ENCODE measurements at regions of chr4 and their contacts with region 1.

Region 1: GRCh38 chr4:38179690-38180377 is 219.6 kb downstream of the PTTG2 start:
- DNase-seq: peak; percentile 31 to 85 (median 64)
- ATAC-seq: peak; percentile 41 to 55 (median 46)
- H3K4me3 ChIP-seq: no peak overlapping the region
- H3K4me3 Mint-ChIP-seq: no peak overlapping the region
- H3K27ac ChIP-seq: no peak overlapping the region
- H3K27ac Mint-ChIP-seq: no peak overlapping the region
- H3K4me1 ChIP-seq: peaks cover 14 to 27% of the 10 kb centered on the region in 2 experiments
- H3K4me1 Mint-ChIP-seq: peaks cover 34 to 45% (median 41%) of the 10 kb centered on the region in 3 donors
- H3K27me3 ChIP-seq: no peaks in the 10 kb centered on the region
- H3K27me3 Mint-ChIP-seq: no peaks in the 10 kb centered on the region

Region 2: GRCh38 chr4:37977471-37978247 is 202.2 kb before region 1 on chr4:
- CTCF ChIA-PET with region 1: no interaction called
- POLR2A ChIA-PET with region 1: no interaction called
- DNase-seq: peak; percentile 48 to 86 (median 69)
- ATAC-seq: peak; percentile 82 to 87 (median 84)
- H3K4me3 ChIP-seq: peak overlapping the region; percentile 52 to 68
- H3K4me3 Mint-ChIP-seq: peak overlapping the region; percentile 79 to 84 (median 84)
- H3K27ac ChIP-seq: peak overlapping the region; percentile 54
- H3K27ac Mint-ChIP-seq: peak overlapping the region; percentile 71 to 72
- H3K4me1 ChIP-seq: peaks cover 6 to 13% of the 10 kb centered on the region in 2 experiments
- H3K4me1 Mint-ChIP-seq: peaks cover 18 to 43% (median 37%) of the 10 kb centered on the region in 3 donors
- H3K27me3 ChIP-seq: no peaks in the 10 kb centered on the region
- H3K27me3 Mint-ChIP-seq: no peaks in the 10 kb centered on the region

Region 3: DNA sequence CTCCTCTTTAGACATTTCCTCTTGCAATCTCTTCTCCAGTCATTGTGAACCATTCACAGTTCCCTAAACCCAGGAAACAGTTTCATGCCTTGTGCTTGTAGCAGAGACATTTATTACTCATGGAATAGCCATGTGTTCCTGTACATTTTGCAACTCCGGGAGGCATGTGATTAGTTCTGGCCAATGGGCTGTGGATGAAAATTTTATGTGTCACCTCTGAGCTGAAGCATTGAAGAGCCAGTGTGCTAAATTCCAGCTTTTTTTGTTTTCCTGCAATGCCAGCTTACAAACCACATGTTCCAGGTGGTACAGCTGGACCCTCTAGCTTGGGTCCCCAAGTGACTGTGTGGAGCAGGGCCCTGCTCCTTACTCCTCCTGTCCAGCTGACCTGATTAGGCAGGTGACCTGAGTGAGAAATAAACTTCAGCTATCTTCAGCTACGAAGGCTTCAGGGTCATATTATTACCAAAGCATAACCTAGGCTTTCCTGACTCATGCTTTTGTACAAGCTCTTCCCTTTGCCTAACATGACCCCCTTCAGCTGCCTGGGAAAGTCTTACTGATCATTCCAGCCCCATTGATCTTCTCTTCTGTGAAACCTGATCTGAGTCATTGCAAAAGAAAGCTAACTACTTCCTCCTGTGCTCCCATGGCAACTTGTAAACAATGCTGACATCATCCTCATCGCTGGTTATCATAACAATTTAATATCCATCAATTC is 19.2 kb before region 1 on chr4:
- CTCF ChIA-PET with region 1: interaction called, 3 to 4 read pairs
- POLR2A ChIA-PET with region 1: interaction called in 1 of 2 experiments, 13 read pairs
- DNase-seq: peak in 22 of 35 experiments; percentile 3 to 73 (median 23)
- ATAC-seq: peak; percentile 74 to 93 (median 82)
- H3K4me3 ChIP-seq: no peak overlapping the region
- H3K4me3 Mint-ChIP-seq: no peak overlapping the region
- H3K27ac ChIP-seq: peak overlapping the region; percentile 46
- H3K27ac Mint-ChIP-seq: peak overlapping the region; percentile 30 to 54
- H3K4me1 ChIP-seq: peaks cover 3 to 16% of the 10 kb centered on the region in 2 experiments
- H3K4me1 Mint-ChIP-seq: peaks cover 50 to 67% (median 59%) of the 10 kb centered on the region in 3 donors
- H3K27me3 ChIP-seq: no peaks in the 10 kb centered on the region
- H3K27me3 Mint-ChIP-seq: no peaks in the 10 kb centered on the region

Region 4: DNA sequence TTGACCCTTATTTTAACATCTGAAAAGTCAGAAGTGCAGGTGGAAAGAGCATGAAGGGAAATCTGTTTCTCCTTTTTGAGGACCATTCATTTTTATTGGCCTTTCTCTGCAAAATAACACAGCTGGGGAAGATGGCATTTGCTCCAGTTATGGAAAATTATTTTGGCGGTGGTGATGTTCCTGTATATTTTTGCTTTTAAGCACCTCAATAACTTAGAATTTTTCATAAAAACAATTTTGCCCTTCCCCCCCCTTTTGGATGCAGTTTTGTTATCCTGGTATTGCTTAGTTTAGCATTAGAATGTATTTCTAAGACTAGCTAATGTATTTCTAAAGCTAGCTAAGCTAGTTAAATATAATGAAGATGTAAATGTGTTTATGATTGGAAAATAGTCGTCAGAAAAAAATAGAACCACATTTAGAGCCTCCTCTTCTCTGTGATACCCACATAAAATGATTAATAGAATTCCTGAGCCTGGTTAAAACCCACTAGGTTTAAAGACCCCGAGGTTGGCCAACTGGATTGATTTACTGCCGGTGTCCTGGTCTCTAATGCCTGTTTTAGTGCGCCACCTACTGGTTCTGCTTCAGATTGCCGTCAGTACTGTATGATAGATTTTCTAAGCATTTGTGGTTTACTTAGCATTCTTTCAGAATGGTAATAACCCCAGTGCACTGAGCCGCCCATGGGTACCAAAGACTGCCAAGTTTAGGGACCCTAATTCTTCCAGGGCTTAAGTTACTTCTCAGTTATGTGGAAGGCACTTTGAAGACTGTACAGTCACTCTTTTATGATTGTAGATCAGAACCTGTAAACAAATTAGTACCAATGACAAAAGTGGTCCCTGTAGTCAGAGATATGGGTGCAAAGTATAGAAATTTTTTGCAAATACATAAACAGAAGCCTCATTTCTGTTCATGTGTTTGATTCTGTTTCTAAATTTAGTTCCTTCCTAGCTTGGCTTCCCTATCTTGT is 495.6 kb after region 1 on chr4:
- CTCF ChIA-PET with region 1: interaction called, 9 to 67 read pairs
- POLR2A ChIA-PET with region 1: interaction called in 1 of 2 experiments, 3 read pairs
- DNase-seq: peak; percentile 55 to 94 (median 78)
- ATAC-seq: peak; percentile 51 to 65 (median 58)
- H3K4me3 ChIP-seq: no peak overlapping the region
- H3K4me3 Mint-ChIP-seq: peak overlapping the region; percentile 70 to 97 (median 82)
- H3K27ac ChIP-seq: peak overlapping the region; percentile 72
- H3K27ac Mint-ChIP-seq: peak overlapping the region; percentile 94 to 96
- H3K4me1 ChIP-seq: peaks cover 60 to 72% of the 10 kb centered on the region in 2 experiments
- H3K4me1 Mint-ChIP-seq: peaks cover 87 to 98% (median 94%) of the 10 kb centered on the region in 3 donors
- H3K27me3 ChIP-seq: no peaks in the 10 kb centered on the region
- H3K27me3 Mint-ChIP-seq: no peaks in the 10 kb centered on the region

Region 5: GRCh38 chr4:38759113-38759789 is 579.4 kb after region 1 on chr4:
- CTCF ChIA-PET with region 1: interaction called in 1 of 2 experiments, 13 read pairs
- POLR2A ChIA-PET with region 1: no interaction called
- DNase-seq: peak in 30 of 35 experiments; percentile 19 to 82 (median 43)
- ATAC-seq: peak; percentile 61 to 85 (median 75)
- H3K4me3 ChIP-seq: no peak overlapping the region
- H3K4me3 Mint-ChIP-seq: no peak overlapping the region
- H3K27ac ChIP-seq: no peak overlapping the region
- H3K27ac Mint-ChIP-seq: peak overlapping the region in 1 of 2 donors; percentile 8
- H3K4me1 ChIP-seq: peaks cover 0 to 10% of the 10 kb centered on the region in 2 experiments
- H3K4me1 Mint-ChIP-seq: peaks cover 20 to 27% (median 24%) of the 10 kb centered on the region in 3 donors
- H3K27me3 ChIP-seq: peaks cover 0 to 2% of the 10 kb centered on the region in 2 experiments
- H3K27me3 Mint-ChIP-seq: no peaks in the 10 kb centered on the region

Measured in T-cell (primary cell).